H1 (cell line): ENCODE measurements at regions of chr13 and their contacts with region 1.

Region 1: DNA sequence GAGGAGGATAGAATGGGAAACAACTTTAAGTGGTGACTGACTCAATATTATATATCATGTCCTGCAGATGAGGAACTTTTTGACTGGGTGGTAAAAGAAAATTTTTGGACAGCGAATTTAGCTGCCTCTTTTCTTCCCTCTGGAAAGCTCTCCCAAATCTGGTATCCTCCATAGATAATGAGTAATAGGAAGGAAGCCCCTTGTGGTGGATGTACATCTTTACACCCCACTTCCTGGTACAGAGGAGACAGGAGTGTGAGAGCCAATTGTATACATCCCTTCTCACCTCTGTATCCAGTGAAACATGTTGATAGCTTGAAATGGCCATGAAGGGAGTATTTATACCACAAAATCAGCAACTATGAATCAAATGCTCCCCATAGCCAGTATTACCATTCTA is 17.2 kb upstream of the TDRD3 start:
- DNase-seq: no peak
- H3K4me3 ChIP-seq: no peak overlapping the region
- H3K27ac ChIP-seq: no peak overlapping the region
- H3K4me1 ChIP-seq: no peaks in the 10 kb centered on the region
- H3K27me3 ChIP-seq: no peaks in the 10 kb centered on the region
- CTCF ChIP-seq: peak in 1 of 3 experiments; percentile 53; a peak in 1 of 4 replicates
- EP300 ChIP-seq: no peak
- POLR2A ChIP-seq: no peak
- RAD21 ChIP-seq: no peak

Region 2: GRCh38 chr13:60392131-60392530 is 12.3 kb after region 1 on chr13:
- CTCF ChIA-PET with region 1: interaction called, 17 read pairs
- POLR2A ChIA-PET with region 1: interaction called, 3 read pairs
- DNase-seq: no peak
- H3K4me3 ChIP-seq: no peak overlapping the region
- H3K27ac ChIP-seq: no peak overlapping the region
- H3K4me1 ChIP-seq: peaks cover 0 to 2% (median under 1%) of the 10 kb centered on the region in 4 experiments; a peak in 1 of 7 replicates
- H3K27me3 ChIP-seq: no peaks in the 10 kb centered on the region
- CTCF ChIP-seq: no peak
- EP300 ChIP-seq: no peak
- POLR2A ChIP-seq: no peak
- RAD21 ChIP-seq: no peak

Region 3: DNA sequence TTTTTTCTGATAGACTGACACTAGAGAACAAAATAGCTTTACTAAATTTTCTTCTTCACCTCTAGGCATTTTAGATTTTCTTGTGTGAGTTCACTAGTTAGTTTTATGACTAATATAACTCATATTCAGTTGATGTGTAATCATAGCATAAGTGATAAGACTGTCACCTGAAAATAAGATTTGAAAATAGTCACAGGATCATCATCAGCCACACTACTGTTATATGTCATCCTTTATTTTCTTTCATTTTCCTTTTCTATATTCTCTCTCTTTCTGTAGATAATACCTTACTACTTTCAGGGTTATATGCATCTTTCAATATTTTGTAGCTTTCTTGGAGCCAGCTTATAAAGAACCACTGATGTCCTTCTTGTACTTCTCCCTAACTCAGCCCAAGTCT is 309.7 kb after region 1 on chr13:
- CTCF ChIA-PET with region 1: no interaction called
- POLR2A ChIA-PET with region 1: no interaction called
- DNase-seq: no peak
- H3K4me3 ChIP-seq: no peak overlapping the region
- H3K27ac ChIP-seq: no peak overlapping the region
- H3K4me1 ChIP-seq: no peaks in the 10 kb centered on the region
- H3K27me3 ChIP-seq: peaks cover 0 to 1% (median 0%) of the 10 kb centered on the region in 4 experiments; a peak in 1 of 7 replicates
- CTCF ChIP-seq: no peak
- EP300 ChIP-seq: no peak
- POLR2A ChIP-seq: no peak
- RAD21 ChIP-seq: no peak